ENCODE measurements at regions of chr5 and their contacts with region 1.

Region 1: DNA sequence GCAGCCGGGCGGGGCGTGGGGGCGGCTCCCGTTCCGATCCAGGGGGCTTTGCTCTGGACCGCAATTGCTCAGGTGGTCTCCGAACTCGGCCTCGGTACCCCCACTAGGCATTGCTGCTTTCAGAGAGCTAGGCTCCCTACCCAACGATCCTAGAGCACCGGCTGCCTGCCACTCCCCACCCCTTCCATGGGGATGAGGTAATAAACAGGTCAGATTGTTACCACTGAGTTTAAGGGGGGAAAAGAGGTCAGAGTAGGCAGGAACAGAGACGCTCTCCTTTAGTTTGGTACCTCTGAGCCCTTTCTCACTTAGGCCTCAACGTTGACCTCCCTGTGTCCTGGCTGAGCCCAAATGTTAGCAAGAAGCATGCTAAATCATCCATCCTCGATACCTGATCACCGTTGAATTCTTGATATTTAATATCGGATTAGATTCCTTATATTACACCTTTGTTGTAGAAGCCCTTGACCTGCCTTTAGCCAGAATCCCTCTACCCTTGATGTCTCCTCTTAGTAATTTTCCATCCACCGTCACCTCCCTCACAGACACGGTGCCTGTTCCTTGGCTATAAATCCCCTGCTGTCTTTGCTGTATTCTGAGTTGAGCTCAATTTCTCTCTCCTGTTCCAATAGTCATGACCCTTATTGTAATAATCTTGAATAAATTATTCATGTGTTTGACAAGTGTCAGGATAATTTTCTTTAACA is 588 bp upstream of the PLPP1 start:
- DNase-seq: no peak
- H3K27ac ChIP-seq: peak overlapping the region; percentile 93
- CTCF ChIP-seq: no peak

Region 2: GRCh38 chr5:56026863-56027300 is 491.5 kb after region 1 on chr5:
- CTCF ChIA-PET with region 1: no interaction called
- POLR2A ChIA-PET with region 1: interaction called, 11 read pairs
- DNase-seq: peak; percentile 89
- H3K27ac ChIP-seq: peak overlapping the region; percentile 67
- CTCF ChIP-seq: no peak